Cardiac septum (tissue), 1 donor: ENCODE measurements at regions of chrX and their contacts with region 1.

Region 1: DNA sequence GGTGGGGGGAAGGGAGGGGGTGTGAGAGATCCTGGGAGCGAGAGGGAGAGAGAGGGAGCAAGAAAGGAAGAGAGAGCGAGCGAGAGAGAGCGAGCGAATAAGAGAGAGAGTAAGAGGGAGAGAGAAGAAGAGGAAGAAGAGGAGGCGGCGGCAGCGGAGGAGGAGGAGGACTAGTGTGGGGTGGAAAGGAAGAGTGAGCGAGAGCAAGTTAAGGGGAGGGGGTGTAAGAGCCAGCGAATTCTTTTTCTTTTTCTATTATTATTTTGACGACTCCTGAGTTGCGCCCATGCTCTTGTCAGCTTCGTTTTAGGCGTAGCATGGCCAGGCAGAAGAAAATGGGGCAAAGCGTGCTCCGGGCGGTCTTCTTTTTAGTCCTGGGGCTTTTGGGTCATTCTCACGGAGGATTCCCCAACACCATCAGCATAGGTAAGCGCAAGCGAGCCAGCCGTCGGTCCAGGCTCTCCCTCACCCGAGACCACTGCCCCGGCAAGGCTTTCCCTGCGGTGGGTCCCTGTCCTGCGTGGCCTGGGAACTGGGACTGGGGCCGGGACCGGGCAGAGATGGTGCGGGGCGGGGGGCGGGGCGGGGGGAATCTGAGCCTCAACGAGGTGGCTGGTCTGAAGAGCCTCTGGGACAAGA is at the start of gene GRIA3:
- DNase-seq: no peak
- total RNA-seq, gene GRIA3: 14.2 TPM

Region 2: DNA sequence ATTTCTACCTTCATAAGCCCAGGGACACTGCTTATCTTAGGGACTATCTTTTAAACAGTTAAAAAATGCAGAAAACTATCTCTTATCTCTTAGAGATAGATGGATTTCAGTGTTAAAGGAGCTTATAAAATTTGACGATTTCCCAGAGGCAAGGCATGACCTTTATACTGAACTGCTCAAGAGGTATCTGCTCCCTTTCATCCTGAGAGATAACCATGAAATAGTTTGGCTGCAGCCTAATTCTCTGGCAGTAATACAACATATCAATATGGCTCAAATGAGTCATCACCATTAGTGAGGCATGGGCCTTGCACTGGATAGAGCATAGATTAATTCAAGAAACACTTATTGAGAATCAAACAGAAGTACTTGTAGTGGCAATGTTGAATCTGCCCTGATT is 348.5 kb before region 1 on chrX:
- intact Hi-C with region 1: no loop called
- DNase-seq: no peak

Region 3: DNA sequence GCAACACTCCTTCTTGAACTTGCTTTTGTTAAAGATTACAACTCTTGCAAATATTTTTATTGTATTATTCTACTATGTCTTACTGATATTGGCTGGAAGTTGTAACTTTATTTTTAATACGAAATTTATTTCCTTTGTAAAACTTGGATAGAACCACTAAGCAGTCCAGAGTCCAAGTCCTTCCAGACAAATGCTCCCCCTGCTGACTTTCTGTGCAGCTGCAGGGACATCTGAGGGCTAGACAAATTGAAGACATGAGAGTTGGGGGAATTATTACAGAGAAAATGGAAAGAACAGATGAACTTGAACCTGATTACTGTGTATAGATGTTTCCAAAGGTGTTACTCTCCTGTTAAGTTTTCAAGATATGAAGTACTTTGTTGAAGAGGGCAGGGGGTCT is 238.5 kb after region 1 on chrX:
- intact Hi-C with region 1: loop called (anchors 10 kb)
- DNase-seq: no peak